Mammary epithelial cell (primary cell): ENCODE measurements at regions of chr20 and their contacts with region 1.

Region 1: DNA sequence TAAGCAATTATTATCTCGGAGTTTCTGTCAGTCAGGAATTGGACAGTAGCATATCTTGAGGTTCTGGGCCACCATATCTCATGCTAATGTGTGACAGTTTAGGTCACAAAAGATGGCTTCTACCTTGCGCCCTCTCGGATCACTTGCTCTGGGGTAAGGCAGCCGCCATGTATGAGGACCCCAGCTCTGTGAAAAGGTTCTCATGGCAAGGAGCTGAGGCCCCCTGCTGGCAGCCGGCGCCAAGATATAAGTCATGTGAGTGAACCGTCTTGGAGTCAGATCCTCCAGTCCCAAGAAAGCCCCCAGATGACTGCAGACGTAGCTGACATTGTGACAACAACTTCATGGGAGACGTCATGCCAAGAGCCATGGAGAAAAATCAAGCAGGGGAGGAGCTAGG is 670.8 kb downstream of the KIF16B start:
- DNase-seq: no peak
- H3K4me3 ChIP-seq: no peak overlapping the region
- H3K27ac ChIP-seq: no peak overlapping the region
- H3K4me1 ChIP-seq: no peaks in the 10 kb centered on the region
- H3K27me3 ChIP-seq: no peaks in the 10 kb centered on the region
- CTCF ChIP-seq: peak; percentile 22 to 35

Region 2: GRCh38 chr20:15776770-15777466 is 125.6 kb before region 1 on chr20:
- CTCF ChIA-PET with region 1: no interaction called
- dilution Hi-C with region 1: no loop called
- in situ Hi-C with region 1: no loop called
- intact Hi-C with region 1: no loop called
- DNase-seq: no peak
- H3K4me3 ChIP-seq: no peak overlapping the region
- H3K27ac ChIP-seq: no peak overlapping the region
- H3K4me1 ChIP-seq: no peaks in the 10 kb centered on the region
- H3K27me3 ChIP-seq: no peaks in the 10 kb centered on the region
- CTCF ChIP-seq: no peak

Region 3: GRCh38 chr20:15867901-15868300 is 34.6 kb before region 1 on chr20:
- CTCF ChIA-PET with region 1: no interaction called
- dilution Hi-C with region 1: no loop called
- in situ Hi-C with region 1: no loop called
- intact Hi-C with region 1: no loop called
- DNase-seq: no peak
- H3K4me3 ChIP-seq: no peak overlapping the region
- H3K27ac ChIP-seq: no peak overlapping the region
- H3K4me1 ChIP-seq: no peaks in the 10 kb centered on the region
- H3K27me3 ChIP-seq: no peaks in the 10 kb centered on the region
- CTCF ChIP-seq: peak; percentile 25 to 57

Region 4: GRCh38 chr20:15937179-15937578 is 34.7 kb after region 1 on chr20:
- CTCF ChIA-PET with region 1: interaction called, 16 read pairs
- dilution Hi-C with region 1: no loop called
- in situ Hi-C with region 1: no loop called
- intact Hi-C with region 1: no loop called
- DNase-seq: no peak
- H3K4me3 ChIP-seq: no peak overlapping the region
- H3K27ac ChIP-seq: no peak overlapping the region
- H3K4me1 ChIP-seq: peaks cover 3% of the 10 kb centered on the region
- H3K27me3 ChIP-seq: no peaks in the 10 kb centered on the region
- CTCF ChIP-seq: no peak